ENCODE measurements at regions of chr12 and their contacts with region 1.

Region 1: GRCh38 chr12:49740930-49741881 is at the start of gene TMBIM6:
- DNase-seq: peak; percentile 97 to 100
- ATAC-seq: peak; percentile 98
- H3K4me3 ChIP-seq: peak within 1 kb of the TSS; percentile 67
- H3K27ac ChIP-seq: peak within 1 kb of the TSS; percentile 71 to 92
- H3K4me1 ChIP-seq: peaks cover 18% of the 10 kb centered on the region
- CTCF ChIP-seq: peak; percentile 81
- EP300 ChIP-seq: no peak
- POLR2A ChIP-seq: peak; percentile 97
- RAD21 ChIP-seq: peak; percentile 42 to 62; a peak in 4 of 5 replicates
- polyA plus RNA-seq, gene TMBIM6: 1,088 and 1,255 TPM in 2 replicates

Region 2: GRCh38 chr12:49264738-49265515 is 476.3 kb before region 1 on chr12 and contains the start of gene TUBA1C:
- CTCF ChIA-PET with region 1: no interaction called
- POLR2A ChIA-PET with region 1: interaction called, 10 read pairs
- DNase-seq: peak; percentile 91 to 97
- ATAC-seq: peak; percentile 80 to 83
- H3K4me3 ChIP-seq: peak within 1 kb of the TSS; percentile 71
- H3K27ac ChIP-seq: peak within 1 kb of the TSS; percentile 94 to 100
- H3K4me1 ChIP-seq: peaks cover 36% of the 10 kb centered on the region
- CTCF ChIP-seq: no peak
- EP300 ChIP-seq: no peak
- POLR2A ChIP-seq: peak; percentile 99
- RAD21 ChIP-seq: no peak
- polyA plus RNA-seq, gene TUBA1C: 1,183 and 1,488 TPM in 2 replicates

Region 3: GRCh38 chr12:49403971-49404450 is 337.2 kb before region 1 on chr12:
- CTCF ChIA-PET with region 1: no interaction called
- POLR2A ChIA-PET with region 1: no interaction called
- DNase-seq: no peak
- ATAC-seq: no peak
- H3K4me3 ChIP-seq: no peak overlapping the region
- H3K27ac ChIP-seq: no peak overlapping the region
- H3K4me1 ChIP-seq: peaks cover 44% of the 10 kb centered on the region
- CTCF ChIP-seq: no peak
- EP300 ChIP-seq: no peak
- POLR2A ChIP-seq: no peak
- RAD21 ChIP-seq: no peak

Region 4: DNA sequence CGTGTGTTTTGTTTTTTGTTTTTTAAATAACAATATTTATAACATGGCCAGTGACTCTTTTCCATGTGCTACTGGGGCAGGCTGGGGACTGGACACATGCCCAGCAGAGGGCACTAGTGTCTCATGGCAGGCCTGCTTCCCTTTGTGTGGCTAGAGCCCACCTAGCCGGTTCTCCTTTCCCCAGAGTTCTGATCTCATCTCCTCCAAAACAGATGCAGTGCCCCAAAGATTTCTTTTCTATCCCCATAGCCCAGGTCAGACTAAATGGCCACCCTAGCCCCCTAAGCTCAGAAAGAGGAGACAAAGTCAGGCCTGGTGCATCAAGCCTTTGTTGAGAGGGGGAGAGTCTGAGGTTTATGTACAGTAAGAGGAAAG is 96.6 kb before region 1 on chr12:
- CTCF ChIA-PET with region 1: interaction called, 5 read pairs
- POLR2A ChIA-PET with region 1: interaction called, 11 read pairs
- DNase-seq: peak; percentile 68 to 86
- ATAC-seq: peak; percentile 68 to 92; a peak in 5 of 6 replicates
- H3K4me3 ChIP-seq: no peak overlapping the region
- H3K27ac ChIP-seq: no peak overlapping the region
- H3K4me1 ChIP-seq: no peaks in the 10 kb centered on the region
- CTCF ChIP-seq: peak; percentile 90
- EP300 ChIP-seq: no peak
- POLR2A ChIP-seq: no peak
- RAD21 ChIP-seq: peak; percentile 87 to 96

Region 5: GRCh38 chr12:49720214-49720613 is 21.0 kb before region 1 on chr12:
- CTCF ChIA-PET with region 1: interaction called, 17 read pairs
- POLR2A ChIA-PET with region 1: interaction called, 20 read pairs
- DNase-seq: no peak
- ATAC-seq: peak; percentile 66 to 77; a peak in 5 of 6 replicates
- H3K4me3 ChIP-seq: no peak overlapping the region
- H3K27ac ChIP-seq: no peak overlapping the region
- H3K4me1 ChIP-seq: no peaks in the 10 kb centered on the region
- CTCF ChIP-seq: no peak
- EP300 ChIP-seq: no peak
- POLR2A ChIP-seq: no peak
- RAD21 ChIP-seq: peak in 1 of 2 experiments; percentile 9; a peak in 1 of 5 replicates

Region 6: GRCh38 chr12:49763006-49763591 is 21.9 kb after region 1 on chr12:
- CTCF ChIA-PET with region 1: interaction called, 27 read pairs
- POLR2A ChIA-PET with region 1: interaction called, 30 read pairs
- DNase-seq: peak; percentile 67 to 81
- ATAC-seq: peak; percentile 83 to 84
- H3K4me3 ChIP-seq: no peak overlapping the region
- H3K27ac ChIP-seq: no peak overlapping the region
- H3K4me1 ChIP-seq: no peaks in the 10 kb centered on the region
- CTCF ChIP-seq: peak; percentile 82
- EP300 ChIP-seq: no peak
- POLR2A ChIP-seq: no peak
- RAD21 ChIP-seq: peak in 1 of 2 experiments; percentile 9; a peak in 1 of 5 replicates

Region 7: GRCh38 chr12:49776413-49776812 is 35.2 kb after region 1 on chr12:
- CTCF ChIA-PET with region 1: interaction called, 13 read pairs
- POLR2A ChIA-PET with region 1: interaction called, 3 read pairs
- DNase-seq: peak; percentile 83
- ATAC-seq: peak; percentile 93
- H3K4me3 ChIP-seq: no peak overlapping the region
- H3K27ac ChIP-seq: peak overlapping the region; percentile 25 to 67; a peak in 5 of 6 replicates
- H3K4me1 ChIP-seq: no peaks in the 10 kb centered on the region
- CTCF ChIP-seq: peak; percentile 90
- EP300 ChIP-seq: no peak
- POLR2A ChIP-seq: no peak
- RAD21 ChIP-seq: peak; percentile 92 to 97

Region 8: GRCh38 chr12:49828133-49829091 is 87.2 kb after region 1 on chr12 and contains the start of gene NCKAP5L:
- CTCF ChIA-PET with region 1: interaction called, 8 read pairs
- POLR2A ChIA-PET with region 1: interaction called, 19 read pairs
- DNase-seq: peak; percentile 95 to 97
- ATAC-seq: peak; percentile 92 to 96
- H3K4me3 ChIP-seq: peak within 1 kb of the TSS; percentile 97
- H3K27ac ChIP-seq: peak within 1 kb of the TSS; percentile 92
- H3K4me1 ChIP-seq: peaks cover 25% of the 10 kb centered on the region
- CTCF ChIP-seq: no peak
- EP300 ChIP-seq: no peak
- POLR2A ChIP-seq: peak; percentile 42
- RAD21 ChIP-seq: no peak
- polyA plus RNA-seq, gene NCKAP5L: 3.0 and 3.5 TPM in 2 replicates

Region 9: GRCh38 chr12:49855005-49855404 is 113.8 kb after region 1 on chr12:
- CTCF ChIA-PET with region 1: no interaction called
- POLR2A ChIA-PET with region 1: no interaction called
- DNase-seq: no peak
- ATAC-seq: peak in 1 of 2 experiments; percentile 47; a peak in 2 of 6 replicates
- H3K4me3 ChIP-seq: no peak overlapping the region
- H3K27ac ChIP-seq: no peak overlapping the region
- H3K4me1 ChIP-seq: no peaks in the 10 kb centered on the region
- CTCF ChIP-seq: no peak
- EP300 ChIP-seq: no peak
- POLR2A ChIP-seq: no peak
- RAD21 ChIP-seq: no peak